ENCODE measurements at regions of chr6 and their contacts with region 1.

Region 1: GRCh38 chr6:75620381-75621304 is 19.0 kb downstream of the SENP6 start:
- DNase-seq: no peak
- ATAC-seq: no peak
- H3K4me3 Mint-ChIP-seq: no peak overlapping the region
- H3K27ac Mint-ChIP-seq: peak overlapping the region; percentile 37
- H3K4me1 Mint-ChIP-seq: peaks cover 58% of the 10 kb centered on the region
- H3K27me3 Mint-ChIP-seq: no peaks in the 10 kb centered on the region
- CTCF ChIP-seq: no peak

Region 2: DNA sequence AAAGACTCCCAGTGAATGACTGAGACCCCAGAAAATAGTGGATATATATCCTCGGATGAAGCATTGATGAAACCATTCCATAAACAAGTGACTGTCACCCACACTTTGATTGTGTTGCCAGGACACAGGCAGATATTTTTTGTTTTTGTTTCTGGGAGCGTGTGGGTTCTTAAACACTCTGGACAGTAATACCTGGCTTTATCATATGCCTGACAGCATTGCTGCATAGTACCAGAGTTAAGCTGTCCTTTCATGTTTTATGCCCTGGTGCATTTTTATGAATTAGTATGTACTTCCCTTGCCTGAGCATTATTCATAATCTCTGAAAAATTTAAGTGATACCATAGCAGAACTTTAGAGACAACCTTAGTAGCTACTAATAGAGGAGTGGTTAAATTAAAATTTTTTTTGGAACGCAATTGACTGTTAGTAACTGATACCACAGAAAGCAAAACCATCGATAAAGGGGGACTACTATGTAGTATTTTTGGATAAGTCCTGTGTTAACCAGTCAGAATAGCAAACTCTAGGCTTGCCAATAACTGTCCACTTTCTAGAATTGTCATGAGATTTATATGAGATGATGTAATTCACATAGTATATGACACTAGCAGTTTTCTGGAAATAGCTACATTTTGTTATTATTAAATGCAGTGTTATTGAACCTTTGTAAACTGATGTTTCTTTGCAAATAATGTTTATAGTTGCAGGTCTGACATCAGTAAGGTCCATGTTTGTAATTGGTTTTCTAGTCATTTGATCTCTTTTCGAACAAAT is 11.4 kb after region 1 on chr6:
- CTCF ChIA-PET with region 1: no interaction called
- POLR2A ChIA-PET with region 1: no interaction called
- intact Hi-C with region 1: loop called (anchors 2 kb)
- DNase-seq: no peak
- ATAC-seq: no peak
- H3K4me3 Mint-ChIP-seq: no peak overlapping the region
- H3K27ac Mint-ChIP-seq: no peak overlapping the region
- H3K4me1 Mint-ChIP-seq: peaks cover 1% of the 10 kb centered on the region
- H3K27me3 Mint-ChIP-seq: no peaks in the 10 kb centered on the region
- CTCF ChIP-seq: no peak

Measured in activated B cell treated with CpG ODN at 0.5 μM for 24 hours (primary cell).